ENCODE measurements at regions of chr10 and their contacts with region 1.

Region 1: GRCh38 chr10:125060826-125061556 is 99.4 kb downstream of the CTBP2 start:
- DNase-seq: peak; percentile 84 to 90
- ATAC-seq: peak; percentile 67 to 77 (median 70)
- H3K4me3 ChIP-seq: peak overlapping the region; percentile 39
- H3K27ac ChIP-seq: peak overlapping the region; percentile 80
- H3K4me1 ChIP-seq: peaks cover 99% of the 10 kb centered on the region
- H3K27me3 ChIP-seq: no peaks in the 10 kb centered on the region
- CTCF ChIP-seq: peak; percentile 86

Region 2: GRCh38 chr10:124827474-124827873 is 233.5 kb before region 1 on chr10:
- intact Hi-C with region 1: no loop called
- DNase-seq: no peak
- ATAC-seq: peak in 1 of 4 donors; percentile 45
- H3K4me3 ChIP-seq: no peak overlapping the region
- H3K27ac ChIP-seq: no peak overlapping the region
- H3K4me1 ChIP-seq: peaks cover 12% of the 10 kb centered on the region
- H3K27me3 ChIP-seq: no peaks in the 10 kb centered on the region
- CTCF ChIP-seq: peak; percentile 62

Region 3: GRCh38 chr10:124992462-124993344 is 68.3 kb before region 1 on chr10:
- intact Hi-C with region 1: loop called in 1 of 2 experiments (anchors 5 kb)
- DNase-seq: peak; percentile 72 to 90
- ATAC-seq: peak; percentile 65 to 69 (median 66)
- H3K4me3 ChIP-seq: no peak overlapping the region
- H3K27ac ChIP-seq: peak overlapping the region; percentile 42
- H3K4me1 ChIP-seq: peaks cover 16% of the 10 kb centered on the region
- H3K27me3 ChIP-seq: no peaks in the 10 kb centered on the region
- CTCF ChIP-seq: peak; percentile 74

Region 4: DNA sequence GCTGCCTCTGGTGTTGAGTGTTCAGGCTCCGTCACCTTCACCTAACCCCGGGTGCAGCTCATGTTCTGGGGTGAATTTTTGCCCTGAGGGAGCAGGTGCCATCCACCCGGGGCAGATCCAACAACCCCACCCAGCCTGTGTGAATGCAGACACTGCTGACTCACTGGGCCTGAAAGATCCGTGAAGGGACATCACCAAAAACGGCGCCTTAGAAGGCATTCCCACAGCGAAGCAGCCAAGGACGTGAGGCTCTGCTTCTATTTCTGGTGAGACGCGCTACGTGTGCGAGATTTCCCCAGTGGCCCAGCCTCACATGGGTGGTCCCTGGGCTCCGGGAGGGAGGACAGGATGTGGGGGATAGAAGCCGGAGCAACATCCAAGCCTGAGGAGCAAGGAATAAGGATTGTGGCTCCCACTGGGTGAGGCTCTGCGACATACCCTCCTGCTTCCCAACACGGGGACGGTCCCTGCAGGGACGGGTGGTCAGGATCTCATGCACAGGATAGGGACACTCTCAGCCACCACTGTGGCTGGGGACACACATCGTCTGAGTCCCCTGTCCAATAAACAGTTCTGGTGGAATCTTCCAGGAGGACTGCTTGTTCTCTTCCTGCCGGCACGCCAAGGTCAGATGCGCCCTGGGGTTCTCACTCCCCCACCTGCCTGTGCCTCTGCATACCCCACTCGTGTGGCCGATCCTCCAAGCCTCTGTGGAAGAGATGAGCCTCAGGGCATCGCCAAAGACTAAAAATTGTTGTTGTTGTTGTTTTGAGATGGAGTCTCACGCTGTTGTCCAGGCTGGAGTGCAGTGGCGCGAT is 48.9 kb before region 1 on chr10:
- intact Hi-C with region 1: loop called in 1 of 2 experiments (anchors 5 kb)
- DNase-seq: peak; percentile 52 to 89
- ATAC-seq: peak; percentile 61 to 73 (median 72)
- H3K4me3 ChIP-seq: no peak overlapping the region
- H3K27ac ChIP-seq: peak overlapping the region; percentile 85
- H3K4me1 ChIP-seq: peaks cover 97% of the 10 kb centered on the region
- H3K27me3 ChIP-seq: no peaks in the 10 kb centered on the region
- CTCF ChIP-seq: no peak

Measured in psoas muscle (tissue), 8 donors.